ENCODE measurements at regions of chr14 and their contacts with region 1.

Region 1: DNA sequence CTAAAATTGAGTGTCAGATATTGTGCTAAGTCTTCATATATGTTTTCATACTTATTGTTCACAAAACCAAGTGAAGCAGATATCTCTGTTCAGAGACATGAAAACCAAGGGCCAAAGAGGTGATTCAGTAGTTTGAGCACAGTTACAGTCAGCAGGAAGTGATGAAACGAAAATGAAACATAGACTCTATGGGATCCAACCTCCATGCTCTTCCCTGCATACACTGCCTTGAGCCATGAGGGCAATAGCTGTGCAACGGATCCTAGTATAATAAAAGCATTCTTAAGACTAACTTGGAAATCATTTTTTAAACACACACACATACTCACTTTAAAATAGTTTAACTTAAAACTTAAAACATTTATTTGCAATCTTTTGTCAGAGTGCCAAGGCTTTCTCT is 27.9 kb downstream of the ESR2 start:
- DNase-seq: no peak
- H3K4me3 Mint-ChIP-seq: peak overlapping the region; percentile 5
- H3K27ac Mint-ChIP-seq: peak overlapping the region; percentile 68
- H3K4me1 Mint-ChIP-seq: peaks cover 21% of the 10 kb centered on the region
- H3K27me3 Mint-ChIP-seq: no peaks in the 10 kb centered on the region

Region 2: GRCh38 chr14:64232095-64232838 is 34.0 kb before region 1 on chr14:
- intact Hi-C with region 1: loop called (anchors 5 kb)
- DNase-seq: no peak
- H3K4me3 Mint-ChIP-seq: no peak overlapping the region
- H3K27ac Mint-ChIP-seq: peak overlapping the region; percentile 78
- H3K4me1 Mint-ChIP-seq: peaks cover 25% of the 10 kb centered on the region
- H3K27me3 Mint-ChIP-seq: peaks cover 15% of the 10 kb centered on the region

Measured in activated T-helper 2 cell treated with anti-CD3 and anti-CD28 coated beads, Interferon-gamma antibody, Interleukin-2, Interleukin-4, amounts not matched to agents 10 μg/mL and 5 μg/mL and 100 μg/mL, durations not matched to agents 14 hours and 24 hours and 36 hours (primary cell).